HCT116 (cell line): ENCODE measurements at regions of chr12 and their contacts with region 1.

Region 1: DNA sequence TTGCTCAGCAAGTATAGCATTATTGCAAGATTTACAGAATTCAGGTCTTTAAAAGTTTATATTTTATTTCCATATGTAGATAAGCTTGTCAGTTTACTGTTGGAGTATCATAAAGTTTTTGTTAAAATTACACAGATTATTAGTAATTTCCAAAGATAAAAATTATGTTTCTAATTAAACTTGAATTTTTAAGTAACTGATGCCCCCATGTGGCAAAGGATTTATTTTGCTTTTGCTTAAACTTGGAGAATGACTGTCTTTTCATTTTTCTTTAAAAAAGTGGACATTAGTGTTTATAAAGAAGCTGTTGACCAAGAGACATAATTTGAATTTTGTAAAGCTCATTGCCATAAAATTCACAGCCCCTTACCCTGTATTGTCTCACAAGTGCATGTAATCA is 45.8 kb downstream of the ETNK1 start:
- DNase-seq: no peak
- ATAC-seq: no peak
- H3K4me3 ChIP-seq: no peak overlapping the region
- H3K27ac ChIP-seq: no peak overlapping the region
- H3K4me1 ChIP-seq: no peaks in the 10 kb centered on the region
- H3K27me3 ChIP-seq: no peaks in the 10 kb centered on the region
- CTCF ChIP-seq: peak in 2 of 3 experiments; percentile 12 to 47; a peak in 2 of 6 replicates
- POLR2A ChIP-seq: no peak
- RAD21 ChIP-seq: peak; percentile 16; the same call in 1 of the 2 replicates

Region 2: GRCh38 chr12:22083167-22083566 is 587.6 kb before region 1 on chr12:
- CTCF ChIA-PET with region 1: interaction called, 8 read pairs
- POLR2A ChIA-PET with region 1: no interaction called
- RAD21 ChIA-PET with region 1: no interaction called
- intact Hi-C with region 1: loop called (anchors 10 kb)
- DNase-seq: peak; percentile 12
- ATAC-seq: peak; percentile 44; the same call in 1 of the 2 replicates
- H3K4me3 ChIP-seq: no peak overlapping the region
- H3K27ac ChIP-seq: no peak overlapping the region
- H3K4me1 ChIP-seq: no peaks in the 10 kb centered on the region
- H3K27me3 ChIP-seq: no peaks in the 10 kb centered on the region
- CTCF ChIP-seq: peak; percentile 13 to 59 (median 42); a peak in 4 of 6 replicates
- POLR2A ChIP-seq: no peak
- RAD21 ChIP-seq: peak; percentile 72

Region 3: DNA sequence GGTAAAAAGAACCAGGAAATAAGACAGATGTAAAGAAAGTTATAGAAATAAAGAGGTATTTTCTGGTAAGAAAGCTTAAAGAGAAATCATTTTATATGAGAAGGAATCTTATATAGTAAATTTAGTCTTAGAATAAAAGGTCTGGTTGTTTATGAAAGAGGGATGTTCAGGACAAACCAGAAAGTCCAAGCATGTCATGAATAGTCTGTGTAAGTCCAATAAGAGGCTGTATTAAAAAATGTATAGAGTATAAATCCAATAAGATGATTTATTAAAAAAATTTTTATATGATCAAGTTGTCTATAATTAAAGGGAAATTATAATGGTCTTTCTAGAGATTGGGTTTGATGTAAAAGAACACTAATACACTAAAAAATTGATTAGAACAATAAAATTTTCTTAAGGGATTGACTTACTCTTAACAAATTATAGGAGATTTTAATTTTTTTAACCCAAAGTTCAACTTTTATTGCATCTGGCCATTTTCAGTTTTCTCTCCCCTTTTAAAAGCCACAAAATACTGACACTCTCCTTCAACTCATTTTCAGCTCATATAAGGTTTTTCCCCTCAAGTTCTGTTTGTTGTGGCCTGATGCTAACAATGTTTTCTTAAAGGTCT is 371.4 kb before region 1 on chr12:
- CTCF ChIA-PET with region 1: no interaction called
- POLR2A ChIA-PET with region 1: no interaction called
- RAD21 ChIA-PET with region 1: no interaction called
- intact Hi-C with region 1: no loop called
- DNase-seq: no peak
- ATAC-seq: no peak
- H3K4me3 ChIP-seq: no peak overlapping the region
- H3K27ac ChIP-seq: no peak overlapping the region
- H3K4me1 ChIP-seq: no peaks in the 10 kb centered on the region
- H3K27me3 ChIP-seq: no peaks in the 10 kb centered on the region
- CTCF ChIP-seq: no peak
- POLR2A ChIP-seq: no peak
- RAD21 ChIP-seq: no peak

Region 4: DNA sequence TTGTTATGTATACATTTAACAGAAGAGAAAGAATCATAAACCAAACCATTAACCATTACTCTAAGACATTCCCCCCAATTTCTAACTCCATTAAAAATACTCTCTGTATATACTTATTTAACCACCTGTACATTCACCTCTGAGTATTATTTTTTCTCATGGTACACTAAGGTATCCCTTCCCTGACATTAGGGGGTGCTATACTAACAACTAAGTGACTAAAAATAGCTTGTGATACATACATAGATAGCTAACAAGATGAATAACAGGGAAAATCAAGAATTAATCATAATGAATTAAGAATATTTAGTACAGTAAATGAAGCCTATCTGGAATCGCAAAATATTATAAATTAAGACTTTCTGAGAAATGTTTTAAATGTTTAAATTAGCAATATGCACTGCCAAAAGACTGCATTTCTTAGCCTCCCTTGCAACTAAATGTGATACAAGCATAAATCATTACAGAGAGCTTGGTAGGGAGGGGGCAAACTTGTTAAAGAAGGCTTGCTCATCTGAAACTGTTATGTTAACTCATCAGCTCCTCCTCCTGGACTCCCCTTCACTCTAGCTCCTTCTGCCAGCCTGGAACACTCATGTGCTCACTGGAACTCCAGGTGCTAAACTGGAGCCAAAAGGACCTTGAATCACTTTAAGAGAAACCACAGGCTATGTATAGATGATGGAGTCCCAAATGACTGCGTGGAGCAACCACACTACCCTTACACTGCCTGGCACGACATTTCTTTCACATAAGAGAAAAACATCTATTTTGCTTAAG is 141.3 kb before region 1 on chr12:
- CTCF ChIA-PET with region 1: interaction called, 15 read pairs
- POLR2A ChIA-PET with region 1: no interaction called
- RAD21 ChIA-PET with region 1: no interaction called
- intact Hi-C with region 1: no loop called
- DNase-seq: no peak
- ATAC-seq: peak; percentile 87
- H3K4me3 ChIP-seq: no peak overlapping the region
- H3K27ac ChIP-seq: no peak overlapping the region
- H3K4me1 ChIP-seq: no peaks in the 10 kb centered on the region
- H3K27me3 ChIP-seq: no peaks in the 10 kb centered on the region
- CTCF ChIP-seq: peak; percentile 29 to 66 (median 50); a peak in 5 of 6 replicates
- POLR2A ChIP-seq: no peak
- RAD21 ChIP-seq: peak; percentile 49

Region 5: DNA sequence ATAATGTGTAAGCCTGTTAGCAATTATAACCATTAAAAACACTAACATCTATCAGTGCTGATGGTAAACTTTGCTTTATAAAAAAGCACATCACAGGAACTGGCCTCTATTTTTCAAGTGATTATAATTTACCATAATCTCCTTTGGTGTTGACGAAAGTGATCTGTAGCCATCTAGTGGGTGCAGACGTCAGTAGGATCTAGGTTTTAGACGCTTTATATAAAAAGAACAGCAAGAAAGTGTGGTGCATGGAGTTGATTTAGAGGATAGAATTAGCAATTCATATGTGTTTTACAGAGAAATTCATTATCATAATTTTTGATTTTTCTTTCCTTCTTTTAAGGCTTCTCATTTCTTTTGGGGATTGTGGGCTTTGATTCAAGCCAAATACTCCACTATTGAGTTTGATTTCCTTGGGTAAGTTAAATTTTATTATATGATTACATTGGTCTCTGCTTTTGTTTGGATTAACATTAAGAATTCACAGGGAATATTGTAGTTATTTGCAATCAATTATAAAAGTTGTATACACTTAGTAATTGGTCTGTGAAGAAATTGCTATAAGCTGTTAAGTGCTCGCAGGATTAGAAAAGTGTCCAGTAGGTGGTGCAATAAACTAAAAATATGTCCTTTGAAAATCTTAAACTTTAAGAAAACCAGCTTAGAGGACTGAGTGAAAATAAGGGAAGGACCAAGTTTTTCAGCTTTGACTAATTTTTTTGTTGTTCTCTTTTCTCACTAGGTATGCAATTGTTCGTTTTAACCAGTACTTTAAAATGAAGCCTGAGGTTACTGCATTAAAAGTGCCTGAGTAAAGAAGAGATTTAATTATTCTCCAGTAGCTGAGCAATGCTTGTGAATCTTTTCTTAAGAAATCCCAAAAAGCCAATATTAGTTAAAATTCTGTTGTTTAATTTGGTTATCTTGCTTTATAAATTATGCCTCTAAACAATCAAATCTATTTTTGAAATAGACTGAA is 13.7 kb after region 1 on chr12:
- CTCF ChIA-PET with region 1: interaction called, 11 read pairs
- POLR2A ChIA-PET with region 1: no interaction called
- RAD21 ChIA-PET with region 1: no interaction called
- intact Hi-C with region 1: no loop called
- DNase-seq: peak; percentile 22
- ATAC-seq: peak; percentile 63
- H3K4me3 ChIP-seq: no peak overlapping the region
- H3K27ac ChIP-seq: no peak overlapping the region
- H3K4me1 ChIP-seq: no peaks in the 10 kb centered on the region
- H3K27me3 ChIP-seq: no peaks in the 10 kb centered on the region
- CTCF ChIP-seq: peak; percentile 6 to 78 (median 60); a peak in 4 of 6 replicates
- POLR2A ChIP-seq: no peak
- RAD21 ChIP-seq: peak; percentile 11; the same call in 1 of the 2 replicates